B cell (primary cell): ENCODE measurements at regions of chr18 and their contacts with region 1.

Region 1: DNA sequence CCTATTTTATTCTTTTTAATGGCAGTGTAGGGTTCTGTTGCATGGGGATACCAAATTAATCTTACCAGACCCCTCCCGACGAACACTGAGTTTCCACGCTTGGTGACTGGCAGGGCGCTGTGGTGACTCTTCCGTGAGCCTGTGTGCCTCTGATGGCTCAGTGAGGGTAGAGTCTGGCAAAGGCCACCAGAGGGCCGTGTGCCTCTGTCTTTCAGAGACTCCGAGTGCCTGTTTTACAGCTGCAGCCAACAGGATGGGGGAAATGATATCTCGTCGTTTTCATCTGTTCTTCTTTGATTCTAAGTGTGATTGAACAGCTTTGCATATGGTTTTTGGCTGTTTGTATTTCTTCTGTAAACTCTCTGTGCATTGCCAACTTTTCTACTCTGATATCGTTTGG is 99.8 kb downstream of the ZNF236 start:
- DNase-seq: peak; percentile 83
- ATAC-seq: peak; percentile 100
- H3K4me3 ChIP-seq: no peak overlapping the region
- H3K4me3 Mint-ChIP-seq: peak overlapping the region; percentile 3
- H3K27ac ChIP-seq: no peak overlapping the region
- H3K27ac Mint-ChIP-seq: peak overlapping the region; percentile 68
- H3K4me1 ChIP-seq: peaks cover 0 to 9% of the 10 kb centered on the region in 2 donors
- H3K4me1 Mint-ChIP-seq: peaks cover 10% of the 10 kb centered on the region
- H3K27me3 ChIP-seq: no peaks in the 10 kb centered on the region
- H3K27me3 Mint-ChIP-seq: no peaks in the 10 kb centered on the region
- CTCF ChIP-seq: peak; percentile 83

Region 2: GRCh38 chr18:76803814-76804213 is 118.3 kb before region 1 on chr18:
- CTCF ChIA-PET with region 1: interaction called, 9 read pairs
- POLR2A ChIA-PET with region 1: no interaction called
- intact Hi-C with region 1: loop called (anchors 5 kb)
- DNase-seq: peak; percentile 76
- ATAC-seq: peak; percentile 66
- H3K4me3 ChIP-seq: no peak overlapping the region
- H3K4me3 Mint-ChIP-seq: peak overlapping the region; percentile 56
- H3K27ac ChIP-seq: no peak overlapping the region
- H3K27ac Mint-ChIP-seq: no peak overlapping the region
- H3K4me1 ChIP-seq: peaks cover 15 to 19% of the 10 kb centered on the region in 2 donors
- H3K4me1 Mint-ChIP-seq: peaks cover 13% of the 10 kb centered on the region
- H3K27me3 ChIP-seq: peaks cover 0 to 9% (median 2%) of the 10 kb centered on the region in 4 experiments
- H3K27me3 Mint-ChIP-seq: peaks cover 5% of the 10 kb centered on the region
- CTCF ChIP-seq: peak; percentile 90

Region 3: DNA sequence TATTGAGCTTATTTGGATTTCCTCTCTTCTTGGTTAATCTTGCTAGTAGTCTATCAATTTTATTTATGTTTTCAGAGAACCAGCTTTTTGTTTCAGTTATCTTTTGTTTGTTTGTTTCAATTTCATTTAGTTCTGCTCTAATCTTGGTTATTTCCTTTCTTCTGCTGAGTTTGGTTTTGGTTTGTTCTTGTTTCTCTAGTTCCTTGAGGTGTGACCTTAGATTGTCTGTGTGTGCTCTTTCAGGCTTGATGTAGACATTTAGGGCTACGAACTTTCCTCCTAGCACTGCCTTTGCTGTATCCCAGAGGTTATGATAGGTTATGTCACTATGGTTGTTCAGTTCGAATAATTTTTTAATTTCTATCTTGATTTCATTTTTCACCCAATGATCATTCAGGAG is 41.8 kb after region 1 on chr18:
- CTCF ChIA-PET with region 1: interaction called, 33 read pairs
- POLR2A ChIA-PET with region 1: no interaction called
- intact Hi-C with region 1: loop called (anchors 1 kb)
- DNase-seq: peak; percentile 65
- ATAC-seq: no peak
- H3K4me3 ChIP-seq: peak overlapping the region in 2 of 5 experiments; percentile 18 to 44
- H3K4me3 Mint-ChIP-seq: peak overlapping the region; percentile 71
- H3K27ac ChIP-seq: peak overlapping the region; percentile 26 to 93
- H3K27ac Mint-ChIP-seq: peak overlapping the region; percentile 94
- H3K4me1 ChIP-seq: peaks cover 63 to 67% of the 10 kb centered on the region in 2 donors
- H3K4me1 Mint-ChIP-seq: peaks cover 35% of the 10 kb centered on the region
- H3K27me3 ChIP-seq: no peaks in the 10 kb centered on the region
- H3K27me3 Mint-ChIP-seq: no peaks in the 10 kb centered on the region
- CTCF ChIP-seq: no peak

Region 4: DNA sequence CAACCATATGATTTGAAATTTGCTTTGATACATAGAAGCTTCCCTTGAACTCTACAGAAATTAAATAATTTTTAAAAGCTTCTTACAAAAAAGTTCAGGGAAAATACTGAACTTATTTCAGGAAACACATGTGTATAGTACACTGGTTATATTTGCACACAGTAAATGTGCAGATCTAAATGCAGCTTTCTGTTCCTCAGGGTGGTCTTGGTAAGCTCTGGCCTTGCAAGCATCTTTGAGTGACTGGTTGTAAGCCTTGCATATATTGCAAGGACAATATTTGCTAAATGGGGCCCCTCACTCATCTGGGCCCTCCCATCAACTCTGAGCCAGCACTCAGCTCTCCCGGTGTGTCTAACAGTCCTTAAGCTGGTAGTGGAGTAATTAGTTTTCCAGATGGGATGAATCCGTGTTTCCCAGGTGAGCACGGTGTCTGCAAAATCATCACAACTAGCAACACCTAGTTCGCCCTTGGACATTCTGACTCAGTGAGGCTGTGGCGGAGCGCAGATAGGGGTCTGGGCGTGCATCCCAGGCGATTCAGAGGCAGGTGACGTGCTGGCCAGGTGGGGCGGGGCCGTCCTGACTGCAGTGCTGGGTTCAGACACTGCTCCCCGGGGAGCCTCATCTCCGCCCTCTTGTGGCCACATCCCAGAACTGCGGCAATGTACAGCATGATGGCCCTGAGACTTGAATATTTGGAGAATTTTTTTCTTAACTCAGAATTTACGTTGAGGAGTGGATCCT is 60.9 kb after region 1 on chr18:
- CTCF ChIA-PET with region 1: interaction called, 359 read pairs
- POLR2A ChIA-PET with region 1: interaction called, 16 read pairs
- intact Hi-C with region 1: loop called (anchors 1 kb)
- DNase-seq: peak; percentile 89
- ATAC-seq: peak; percentile 62
- H3K4me3 ChIP-seq: no peak overlapping the region
- H3K4me3 Mint-ChIP-seq: peak overlapping the region; percentile 77
- H3K27ac ChIP-seq: peak overlapping the region in 1 of 2 donors; percentile 9
- H3K27ac Mint-ChIP-seq: peak overlapping the region; percentile 90
- H3K4me1 ChIP-seq: peaks cover 51 to 57% of the 10 kb centered on the region in 2 donors
- H3K4me1 Mint-ChIP-seq: peaks cover 55% of the 10 kb centered on the region
- H3K27me3 ChIP-seq: no peaks in the 10 kb centered on the region
- H3K27me3 Mint-ChIP-seq: no peaks in the 10 kb centered on the region
- CTCF ChIP-seq: peak; percentile 90

Region 5: GRCh38 chr18:77023102-77023782 is 101.1 kb after region 1 on chr18:
- CTCF ChIA-PET with region 1: no interaction called
- POLR2A ChIA-PET with region 1: no interaction called
- intact Hi-C with region 1: no loop called
- DNase-seq: no peak
- ATAC-seq: no peak
- H3K4me3 ChIP-seq: no peak overlapping the region
- H3K4me3 Mint-ChIP-seq: no peak overlapping the region
- H3K27ac ChIP-seq: no peak overlapping the region
- H3K27ac Mint-ChIP-seq: no peak overlapping the region
- H3K4me1 ChIP-seq: peaks cover 0 to 10% of the 10 kb centered on the region in 2 donors
- H3K4me1 Mint-ChIP-seq: peaks cover 2% of the 10 kb centered on the region
- H3K27me3 ChIP-seq: no peaks in the 10 kb centered on the region
- H3K27me3 Mint-ChIP-seq: no peaks in the 10 kb centered on the region
- CTCF ChIP-seq: no peak

Region 6: GRCh38 chr18:77061946-77062517 is 139.9 kb after region 1 on chr18:
- CTCF ChIA-PET with region 1: interaction called, 16 read pairs
- POLR2A ChIA-PET with region 1: no interaction called
- intact Hi-C with region 1: loop called (anchors 1 kb)
- DNase-seq: peak; percentile 87
- ATAC-seq: peak; percentile 50
- H3K4me3 ChIP-seq: no peak overlapping the region
- H3K4me3 Mint-ChIP-seq: peak overlapping the region; percentile 77
- H3K27ac ChIP-seq: peak overlapping the region; percentile 91 to 97
- H3K27ac Mint-ChIP-seq: peak overlapping the region; percentile 100
- H3K4me1 ChIP-seq: peaks cover 77 to 80% of the 10 kb centered on the region in 2 donors
- H3K4me1 Mint-ChIP-seq: peaks cover 80% of the 10 kb centered on the region
- H3K27me3 ChIP-seq: no peaks in the 10 kb centered on the region
- H3K27me3 Mint-ChIP-seq: no peaks in the 10 kb centered on the region
- CTCF ChIP-seq: no peak

Region 7: GRCh38 chr18:77207540-77207939 is 285.4 kb after region 1 on chr18:
- CTCF ChIA-PET with region 1: interaction called, 59 read pairs
- POLR2A ChIA-PET with region 1: no interaction called
- intact Hi-C with region 1: loop called (anchors 1 kb)
- DNase-seq: peak; percentile 65
- ATAC-seq: peak; percentile 65
- H3K4me3 ChIP-seq: no peak overlapping the region
- H3K4me3 Mint-ChIP-seq: peak overlapping the region; percentile 70
- H3K27ac ChIP-seq: no peak overlapping the region
- H3K27ac Mint-ChIP-seq: peak overlapping the region; percentile 65
- H3K4me1 ChIP-seq: peaks cover 4 to 28% of the 10 kb centered on the region in 2 donors
- H3K4me1 Mint-ChIP-seq: peaks cover 30% of the 10 kb centered on the region
- H3K27me3 ChIP-seq: peaks cover 0 to 7% (median 0%) of the 10 kb centered on the region in 4 experiments
- H3K27me3 Mint-ChIP-seq: peaks cover 4% of the 10 kb centered on the region
- CTCF ChIP-seq: peak; percentile 70

Region 8: DNA sequence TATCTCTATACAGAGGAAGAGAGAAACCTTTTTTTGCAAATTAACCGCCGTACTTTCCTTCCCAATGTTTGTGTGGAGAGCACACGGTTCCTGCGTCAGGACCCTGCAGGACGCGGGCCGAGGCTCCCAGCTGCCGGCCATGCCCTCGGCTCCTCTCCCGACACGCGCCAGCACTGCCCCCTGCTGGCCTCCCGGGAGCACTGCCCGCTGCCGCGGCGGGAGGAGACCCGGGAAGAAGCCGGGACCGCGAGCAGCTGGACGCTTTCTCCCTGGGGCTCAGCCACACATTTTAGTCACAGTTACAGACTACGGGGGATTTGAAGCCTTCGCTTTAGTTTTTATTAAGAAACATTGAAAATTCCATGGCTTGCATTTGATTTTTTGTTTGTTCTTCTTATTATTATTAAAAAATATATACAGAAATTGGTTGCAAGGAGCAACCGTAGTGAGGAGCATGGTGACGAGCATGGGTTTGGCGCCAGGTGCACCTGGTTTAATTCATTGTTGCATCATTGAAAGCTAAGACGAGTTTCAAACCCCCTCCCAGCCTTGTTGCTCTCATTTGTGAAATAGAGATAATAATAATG is 728.8 kb after region 1 on chr18:
- CTCF ChIA-PET with region 1: interaction called, 5 read pairs
- POLR2A ChIA-PET with region 1: no interaction called
- intact Hi-C with region 1: loop called (anchors 5 kb)
- DNase-seq: peak; percentile 36
- ATAC-seq: peak; percentile 43
- H3K4me3 ChIP-seq: no peak overlapping the region
- H3K4me3 Mint-ChIP-seq: no peak overlapping the region
- H3K27ac ChIP-seq: no peak overlapping the region
- H3K27ac Mint-ChIP-seq: no peak overlapping the region
- H3K4me1 ChIP-seq: peaks cover 0 to 5% of the 10 kb centered on the region in 2 donors
- H3K4me1 Mint-ChIP-seq: no peaks in the 10 kb centered on the region
- H3K27me3 ChIP-seq: peaks cover 0 to 13% (median 2%) of the 10 kb centered on the region in 4 experiments
- H3K27me3 Mint-ChIP-seq: peaks cover 11% of the 10 kb centered on the region
- CTCF ChIP-seq: peak; percentile 63